Body of pancreas (tissue), 4 donors: ENCODE measurements at regions of chr4 and their contacts with region 1.

Region 1: GRCh38 chr4:75817901-75818300 is 84.4 kb downstream of the PPEF2 start:
- DNase-seq: no peak
- ATAC-seq: no peak
- H3K4me3 ChIP-seq: no peak overlapping the region
- H3K27ac ChIP-seq: no peak overlapping the region
- H3K4me1 ChIP-seq: no peaks in the 10 kb centered on the region
- H3K27me3 ChIP-seq: no peaks in the 10 kb centered on the region
- CTCF ChIP-seq: no peak
- POLR2A ChIP-seq: no peak

Region 2: DNA sequence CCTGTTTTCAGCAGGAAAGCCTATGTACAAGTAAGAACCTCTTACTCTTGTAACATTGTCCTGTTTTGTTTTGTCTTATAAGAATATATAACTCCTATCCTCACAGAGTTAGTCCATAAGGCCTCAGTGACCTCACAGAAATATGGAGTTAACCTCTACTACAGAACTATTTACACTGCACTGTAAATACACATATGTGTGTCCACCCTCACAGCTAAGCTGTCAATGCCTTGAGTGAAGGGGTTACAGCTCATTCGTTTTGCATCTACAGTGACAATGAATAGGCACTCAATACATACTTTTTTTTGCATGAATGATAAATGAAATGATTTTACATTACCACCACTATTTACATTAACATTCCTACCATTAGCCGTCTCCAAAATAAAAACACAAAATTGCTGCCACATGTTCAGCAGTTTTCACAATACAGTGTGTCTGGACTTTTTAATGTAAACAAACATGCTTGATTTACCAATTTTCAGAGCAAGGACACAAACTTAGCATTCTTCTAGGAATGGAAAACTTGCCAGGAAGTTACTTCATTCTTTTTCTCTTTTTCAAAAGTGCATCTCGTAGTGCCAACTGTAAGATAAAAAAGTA is 132.4 kb after region 1 on chr4:
- intact Hi-C with region 1: loop called (anchors 10 kb)
- DNase-seq: no peak
- ATAC-seq: no peak
- H3K4me3 ChIP-seq: no peak overlapping the region
- H3K27ac ChIP-seq: no peak overlapping the region
- H3K4me1 ChIP-seq: no peaks in the 10 kb centered on the region
- H3K27me3 ChIP-seq: no peaks in the 10 kb centered on the region
- CTCF ChIP-seq: no peak
- POLR2A ChIP-seq: no peak